Mammary epithelial cell (primary cell): ENCODE measurements at regions of chr7 and their contacts with region 1.

Region 1: GRCh38 chr7:5797716-5798115 is 16.3 kb upstream of the RNF216 start:
- DNase-seq: no peak
- H3K4me3 ChIP-seq: no peak overlapping the region
- H3K27ac ChIP-seq: no peak overlapping the region
- H3K4me1 ChIP-seq: no peaks in the 10 kb centered on the region
- H3K27me3 ChIP-seq: no peaks in the 10 kb centered on the region
- CTCF ChIP-seq: no peak

Region 2: DNA sequence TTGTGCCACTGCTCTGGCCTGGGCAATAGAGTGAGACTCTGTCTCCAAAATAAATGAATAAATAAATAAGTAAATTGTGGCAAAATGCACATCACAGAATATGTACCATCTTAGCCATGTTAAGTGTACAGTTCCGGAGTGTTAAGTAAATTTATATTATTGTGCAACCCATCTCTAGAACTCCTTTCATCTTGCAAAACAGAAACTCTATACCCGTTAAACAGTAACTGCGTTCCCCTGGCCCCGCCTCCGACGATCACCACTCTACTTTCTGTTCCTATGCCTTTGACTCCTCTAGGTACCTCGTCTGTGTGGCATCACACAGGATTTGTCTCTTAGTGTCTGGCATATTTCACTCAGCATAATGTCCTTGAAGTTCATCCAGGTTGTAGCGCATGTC is 1472.0 kb before region 1 on chr7:
- CTCF ChIA-PET with region 1: no interaction called
- dilution Hi-C with region 1: no loop called
- in situ Hi-C with region 1: no loop called
- intact Hi-C with region 1: no loop called
- DNase-seq: no peak
- H3K4me3 ChIP-seq: no peak overlapping the region
- H3K27ac ChIP-seq: no peak overlapping the region
- H3K4me1 ChIP-seq: no peaks in the 10 kb centered on the region
- H3K27me3 ChIP-seq: no peaks in the 10 kb centered on the region
- CTCF ChIP-seq: no peak

Region 3: DNA sequence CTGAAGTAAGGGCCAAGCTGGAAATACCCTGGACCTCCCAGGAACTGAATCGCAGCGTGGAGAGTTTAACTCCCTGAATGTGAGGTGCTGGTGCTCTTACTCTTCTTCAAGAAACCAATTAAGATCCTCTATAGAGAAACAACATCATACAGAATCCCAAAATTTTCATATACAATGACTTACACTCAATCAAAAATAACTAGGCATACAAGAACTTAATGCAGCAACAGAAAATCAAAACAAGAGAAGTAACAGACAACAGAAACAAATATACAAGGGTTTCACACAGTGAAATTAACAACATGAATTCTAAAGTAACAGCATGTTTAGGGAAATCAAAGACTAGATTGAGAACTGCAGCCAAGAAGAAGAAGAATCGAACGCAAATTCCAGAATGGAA is 53.9 kb before region 1 on chr7:
- CTCF ChIA-PET with region 1: no interaction called
- dilution Hi-C with region 1: loop called (anchors 5 kb)
- in situ Hi-C with region 1: no loop called
- intact Hi-C with region 1: no loop called
- DNase-seq: no peak
- H3K4me3 ChIP-seq: no peak overlapping the region
- H3K27ac ChIP-seq: no peak overlapping the region
- H3K4me1 ChIP-seq: no peaks in the 10 kb centered on the region
- H3K27me3 ChIP-seq: no peaks in the 10 kb centered on the region
- CTCF ChIP-seq: no peak